H1 (cell line): ENCODE measurements at regions of chr22 and their contacts with region 1.

Region 1: GRCh38 chr22:23178512-23179254 is 1.6 kb upstream of the BCR start:
- DNase-seq: peak; percentile 39 to 90
- H3K4me3 ChIP-seq: no peak overlapping the region
- H3K27ac ChIP-seq: no peak overlapping the region
- H3K4me1 ChIP-seq: peaks cover 5 to 29% (median 18%) of the 10 kb centered on the region in 4 experiments
- H3K27me3 ChIP-seq: peaks cover 0 to 6% (median 2%) of the 10 kb centered on the region in 4 experiments; a peak in 1 of 7 replicates
- CTCF ChIP-seq: peak; percentile 94 to 99 (median 99)
- EP300 ChIP-seq: peak in 1 of 2 experiments; percentile 24; a peak in 1 of 3 replicates
- POLR2A ChIP-seq: no peak
- RAD21 ChIP-seq: peak; percentile 97 to 99

Region 2: GRCh38 chr22:23163665-23164064 is 15.0 kb before region 1 on chr22:
- CTCF ChIA-PET with region 1: interaction called, 42 read pairs
- POLR2A ChIA-PET with region 1: no interaction called
- DNase-seq: no peak
- H3K4me3 ChIP-seq: no peak overlapping the region
- H3K27ac ChIP-seq: no peak overlapping the region
- H3K4me1 ChIP-seq: peaks cover 0 to 12% (median 7%) of the 10 kb centered on the region in 4 experiments; a peak in 5 of 7 replicates
- H3K27me3 ChIP-seq: no peaks in the 10 kb centered on the region
- CTCF ChIP-seq: no peak
- EP300 ChIP-seq: no peak
- POLR2A ChIP-seq: no peak
- RAD21 ChIP-seq: no peak

Region 3: GRCh38 chr22:23219822-23220484 is 41.3 kb after region 1 on chr22:
- CTCF ChIA-PET with region 1: interaction called, 16 read pairs
- POLR2A ChIA-PET with region 1: interaction called, 17 read pairs
- DNase-seq: no peak
- H3K4me3 ChIP-seq: no peak overlapping the region
- H3K27ac ChIP-seq: no peak overlapping the region
- H3K4me1 ChIP-seq: peaks cover 5 to 60% (median 31%) of the 10 kb centered on the region in 4 experiments
- H3K27me3 ChIP-seq: no peaks in the 10 kb centered on the region
- CTCF ChIP-seq: no peak
- EP300 ChIP-seq: no peak
- POLR2A ChIP-seq: no peak
- RAD21 ChIP-seq: no peak

Region 4: DNA sequence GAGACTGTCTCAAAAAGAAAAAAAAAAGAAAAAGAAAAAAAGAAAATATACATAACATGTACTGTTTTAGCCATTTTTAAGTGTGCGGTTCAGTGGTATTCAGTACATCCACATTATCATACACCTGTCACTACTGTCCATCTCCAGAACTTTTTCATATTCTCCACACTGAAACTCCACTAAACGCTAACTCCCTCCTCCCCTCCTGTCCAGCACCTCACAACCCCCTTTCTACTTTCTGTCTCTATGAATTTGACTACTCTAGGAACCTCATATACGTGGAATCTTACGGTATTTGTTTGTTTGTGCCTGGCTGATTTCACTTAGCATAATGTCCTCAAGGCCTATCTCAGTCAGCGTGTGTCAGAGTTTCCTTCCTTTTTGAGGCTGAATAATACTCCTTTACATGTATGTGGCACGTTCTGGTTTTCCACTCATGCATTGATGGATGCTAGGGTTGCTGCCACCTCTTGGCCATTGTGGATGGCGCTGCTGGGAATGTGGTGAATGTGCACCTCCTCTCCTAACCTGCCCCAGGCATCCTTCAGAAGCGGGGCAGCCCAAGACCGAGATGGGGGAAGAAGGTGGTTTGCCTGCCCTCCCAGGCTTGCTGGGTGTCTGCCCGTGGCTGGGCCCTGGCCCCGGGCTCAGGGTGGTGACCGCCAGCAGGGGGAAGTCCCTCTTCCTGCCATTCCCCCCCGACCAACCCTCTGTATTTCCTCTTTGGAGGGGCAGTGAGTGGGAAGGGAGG is 62.1 kb after region 1 on chr22:
- CTCF ChIA-PET with region 1: interaction called, 14 read pairs
- POLR2A ChIA-PET with region 1: interaction called, 34 read pairs
- DNase-seq: no peak
- H3K4me3 ChIP-seq: peak overlapping the region in 2 of 4 experiments; percentile 17 to 56; a peak in 1 of 8 replicates
- H3K27ac ChIP-seq: peak overlapping the region; percentile 85
- H3K4me1 ChIP-seq: peaks cover 27 to 63% (median 47%) of the 10 kb centered on the region in 4 experiments
- H3K27me3 ChIP-seq: no peaks in the 10 kb centered on the region
- CTCF ChIP-seq: peak; percentile 56 to 74 (median 72)
- EP300 ChIP-seq: no peak
- POLR2A ChIP-seq: 0 out of 3 replicates have a peak, but pooled peaks of 1 of the 2 experiments have one; percentile 23
- RAD21 ChIP-seq: peak; percentile 33 to 59

Region 5: GRCh38 chr22:23256986-23257888 is 78.6 kb after region 1 on chr22:
- CTCF ChIA-PET with region 1: interaction called, 358 read pairs
- POLR2A ChIA-PET with region 1: interaction called, 4 read pairs
- DNase-seq: no peak
- H3K4me3 ChIP-seq: no peak overlapping the region
- H3K27ac ChIP-seq: no peak overlapping the region
- H3K4me1 ChIP-seq: peaks cover 3 to 14% (median 7%) of the 10 kb centered on the region in 4 experiments
- H3K27me3 ChIP-seq: no peaks in the 10 kb centered on the region
- CTCF ChIP-seq: no peak
- EP300 ChIP-seq: no peak
- POLR2A ChIP-seq: no peak
- RAD21 ChIP-seq: no peak

Region 6: GRCh38 chr22:23281406-23282088 is 102.9 kb after region 1 on chr22:
- CTCF ChIA-PET with region 1: interaction called, 249 read pairs
- POLR2A ChIA-PET with region 1: interaction called, 9 read pairs
- DNase-seq: peak; percentile 68 to 95
- H3K4me3 ChIP-seq: no peak overlapping the region
- H3K27ac ChIP-seq: no peak overlapping the region
- H3K4me1 ChIP-seq: peaks cover 0 to 8% (median 1%) of the 10 kb centered on the region in 4 experiments; a peak in 4 of 7 replicates
- H3K27me3 ChIP-seq: no peaks in the 10 kb centered on the region
- CTCF ChIP-seq: peak; percentile 95 to 98 (median 96)
- EP300 ChIP-seq: no peak
- POLR2A ChIP-seq: no peak
- RAD21 ChIP-seq: peak; percentile 96 to 98